ENCODE measurements at regions of chr1 and their contacts with region 1.

Region 1: GRCh38 chr1:51044834-51045233 is 57.2 kb upstream of the C1orf185 start:
- DNase-seq: no peak
- H3K4me3 ChIP-seq: no peak overlapping the region
- H3K27ac ChIP-seq: no peak overlapping the region
- H3K4me1 ChIP-seq: no peaks in the 10 kb centered on the region
- H3K27me3 ChIP-seq: no peaks in the 10 kb centered on the region
- CTCF ChIP-seq: peak in 3 of 7 experiments; percentile 12 to 26 (median 22)
- EP300 ChIP-seq: no peak
- POLR2A ChIP-seq: no peak

Region 2: GRCh38 chr1:50779801-50780200 is 265.0 kb before region 1 on chr1:
- intact Hi-C with region 1: loop called (anchors 10 kb)
- DNase-seq: no peak
- H3K4me3 ChIP-seq: no peak overlapping the region
- H3K27ac ChIP-seq: no peak overlapping the region
- H3K4me1 ChIP-seq: no peaks in the 10 kb centered on the region
- H3K27me3 ChIP-seq: no peaks in the 10 kb centered on the region
- CTCF ChIP-seq: peak in 1 of 7 experiments; percentile 8
- EP300 ChIP-seq: no peak
- POLR2A ChIP-seq: no peak

Measured in stomach (tissue), 19 donors.